Lower leg skin (tissue), 4 donors: ENCODE measurements at regions of chr16 and their contacts with region 1.

Region 1: DNA sequence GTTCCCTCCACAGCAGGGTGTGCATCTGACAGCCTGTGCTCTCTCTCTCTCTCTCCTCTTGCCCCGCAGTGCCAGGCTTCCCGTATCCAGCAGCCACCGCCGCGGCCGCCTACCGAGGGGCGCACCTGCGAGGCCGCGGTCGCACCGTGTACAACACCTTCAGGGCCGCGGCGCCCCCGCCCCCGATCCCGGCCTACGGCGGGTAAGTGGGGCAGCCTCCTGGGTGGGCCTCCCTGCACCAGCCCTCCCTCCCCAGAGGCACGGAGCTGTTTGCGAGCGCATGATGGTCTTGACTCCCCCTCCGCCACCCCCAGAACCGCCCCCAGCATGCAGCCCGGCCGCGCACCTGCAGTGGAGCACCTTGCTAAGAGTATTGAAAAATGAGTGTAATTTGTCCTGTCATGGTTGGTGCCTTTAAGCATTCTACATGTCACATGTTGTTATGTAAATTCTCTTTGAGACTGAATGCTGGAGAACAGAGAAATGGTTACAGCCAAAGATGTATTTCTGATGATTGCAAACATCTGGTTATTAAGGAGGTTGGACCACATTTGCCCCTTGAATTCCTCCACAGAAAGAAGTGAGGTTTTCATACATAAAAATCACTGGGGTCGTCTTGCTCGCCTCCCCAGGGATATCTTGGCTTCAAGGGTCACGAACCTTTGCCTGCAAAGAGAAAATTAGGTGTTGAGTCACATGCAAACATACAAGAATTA is 321.3 kb downstream of the RBFOX1 start:
- DNase-seq: no peak
- H3K4me3 ChIP-seq: no peak overlapping the region
- CTCF ChIP-seq: no peak
- POLR2A ChIP-seq: no peak

Region 2: GRCh38 chr16:7405166-7405852 is 248.6 kb before region 1 on chr16:
- intact Hi-C with region 1: no loop called
- DNase-seq: peak in 1 of 2 donors; percentile 24
- H3K4me3 ChIP-seq: no peak overlapping the region
- CTCF ChIP-seq: no peak
- POLR2A ChIP-seq: no peak

Region 3: DNA sequence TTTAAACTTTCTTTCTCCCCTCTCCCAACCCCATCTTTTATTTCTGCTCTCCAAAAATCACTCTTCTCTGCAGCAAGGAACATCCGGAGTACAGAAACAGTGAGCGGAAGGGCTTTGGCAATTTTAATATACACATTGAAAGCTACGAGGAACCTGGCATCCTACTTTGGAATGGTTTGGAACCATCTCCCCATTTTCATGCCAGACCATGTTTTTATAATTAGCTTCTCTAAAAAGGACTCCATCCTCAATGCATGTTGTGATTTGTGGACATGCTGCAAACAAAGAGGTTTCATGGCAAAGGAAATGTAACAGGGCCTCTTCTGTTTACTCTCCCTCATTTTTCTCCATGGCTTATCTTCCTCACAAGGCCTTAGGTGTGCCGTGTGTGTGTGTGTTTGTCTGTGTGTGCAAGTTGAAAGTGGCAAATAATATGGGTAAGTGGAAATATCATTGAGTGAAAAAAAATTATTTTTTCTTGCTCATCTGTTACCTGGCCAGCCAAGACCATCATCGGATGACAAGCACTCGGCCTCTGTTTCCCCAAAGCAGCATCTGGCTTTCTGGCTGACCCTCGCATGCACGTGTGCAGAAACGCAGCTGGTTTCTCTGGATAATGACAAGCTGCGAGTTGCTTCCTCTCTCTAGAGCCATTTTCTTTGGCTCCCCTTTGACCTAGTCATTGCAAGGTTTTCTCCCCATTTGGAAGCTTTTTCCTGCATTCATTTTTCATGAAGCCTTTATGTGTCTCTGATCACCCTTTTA is 351.4 kb after region 1 on chr16:
- intact Hi-C with region 1: loop called (anchors 5 kb)
- DNase-seq: no peak
- H3K4me3 ChIP-seq: no peak overlapping the region
- CTCF ChIP-seq: no peak
- POLR2A ChIP-seq: no peak

Region 4: GRCh38 chr16:8998114-8998513 is 1344.2 kb after region 1 on chr16:
- intact Hi-C with region 1: no loop called
- DNase-seq: no peak
- H3K4me3 ChIP-seq: no peak overlapping the region
- CTCF ChIP-seq: no peak
- POLR2A ChIP-seq: no peak